GM12878 (cell line): ENCODE measurements at regions of chr9 and their contacts with region 1.

Region 1: GRCh38 chr9:122904823-122905710 is at the start of gene RC3H2:
- DNase-seq: peak; percentile 99
- ATAC-seq: peak; percentile 88
- H3K4me3 ChIP-seq: peak within 1 kb of the TSS; percentile 98
- H3K27ac ChIP-seq: peak within 1 kb of the TSS; percentile 92
- H3K4me1 ChIP-seq: peaks cover 6% of the 10 kb centered on the region
- H3K27me3 ChIP-seq: no peaks in the 10 kb centered on the region
- CTCF ChIP-seq: no peak
- EP300 ChIP-seq: peak; percentile 31 to 38; a peak in 1 of 4 replicates
- POLR2A ChIP-seq: peak; percentile 94
- RAD21 ChIP-seq: no peak
- polyA plus RNA-seq, gene RC3H2: 7.2 to 9.1 TPM

Region 2: DNA sequence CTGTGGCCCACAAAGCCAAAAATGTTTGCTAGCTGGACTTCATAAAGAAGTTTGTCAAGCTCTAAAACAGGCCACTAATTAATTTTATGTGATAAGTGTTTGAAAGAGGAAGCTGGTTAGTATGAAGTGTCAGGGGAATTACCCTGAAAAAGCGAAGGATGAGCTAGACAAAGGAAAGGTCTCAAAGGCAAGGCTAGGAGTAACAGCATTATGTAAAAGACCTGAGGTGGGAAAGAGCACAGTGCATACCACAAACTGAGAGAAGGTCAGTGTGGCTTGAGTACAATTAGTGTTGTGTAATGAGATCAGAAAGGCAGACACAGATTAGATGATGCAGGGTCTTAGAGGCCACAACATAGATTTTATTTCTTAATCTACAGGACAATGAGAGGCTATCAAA is 29.5 kb before region 1 on chr9:
- CTCF ChIA-PET with region 1: interaction called, 3 read pairs
- POLR2A ChIA-PET with region 1: interaction called, 3 read pairs
- RAD21 ChIA-PET with region 1: interaction called, 3 read pairs
- SMC1A ChIA-PET with region 1: interaction called, 17 read pairs
- in situ Hi-C with region 1: no loop called
- intact Hi-C with region 1: no loop called
- DNase-seq: peak; percentile 20
- ATAC-seq: peak; percentile 63
- H3K4me3 ChIP-seq: no peak overlapping the region
- H3K27ac ChIP-seq: no peak overlapping the region
- H3K4me1 ChIP-seq: no peaks in the 10 kb centered on the region
- H3K27me3 ChIP-seq: no peaks in the 10 kb centered on the region
- CTCF ChIP-seq: no peak
- EP300 ChIP-seq: 0 out of 4 replicates have a peak, but pooled peaks of 1 of the 2 experiments have one; percentile 12
- POLR2A ChIP-seq: no peak
- RAD21 ChIP-seq: no peak

Region 3: DNA sequence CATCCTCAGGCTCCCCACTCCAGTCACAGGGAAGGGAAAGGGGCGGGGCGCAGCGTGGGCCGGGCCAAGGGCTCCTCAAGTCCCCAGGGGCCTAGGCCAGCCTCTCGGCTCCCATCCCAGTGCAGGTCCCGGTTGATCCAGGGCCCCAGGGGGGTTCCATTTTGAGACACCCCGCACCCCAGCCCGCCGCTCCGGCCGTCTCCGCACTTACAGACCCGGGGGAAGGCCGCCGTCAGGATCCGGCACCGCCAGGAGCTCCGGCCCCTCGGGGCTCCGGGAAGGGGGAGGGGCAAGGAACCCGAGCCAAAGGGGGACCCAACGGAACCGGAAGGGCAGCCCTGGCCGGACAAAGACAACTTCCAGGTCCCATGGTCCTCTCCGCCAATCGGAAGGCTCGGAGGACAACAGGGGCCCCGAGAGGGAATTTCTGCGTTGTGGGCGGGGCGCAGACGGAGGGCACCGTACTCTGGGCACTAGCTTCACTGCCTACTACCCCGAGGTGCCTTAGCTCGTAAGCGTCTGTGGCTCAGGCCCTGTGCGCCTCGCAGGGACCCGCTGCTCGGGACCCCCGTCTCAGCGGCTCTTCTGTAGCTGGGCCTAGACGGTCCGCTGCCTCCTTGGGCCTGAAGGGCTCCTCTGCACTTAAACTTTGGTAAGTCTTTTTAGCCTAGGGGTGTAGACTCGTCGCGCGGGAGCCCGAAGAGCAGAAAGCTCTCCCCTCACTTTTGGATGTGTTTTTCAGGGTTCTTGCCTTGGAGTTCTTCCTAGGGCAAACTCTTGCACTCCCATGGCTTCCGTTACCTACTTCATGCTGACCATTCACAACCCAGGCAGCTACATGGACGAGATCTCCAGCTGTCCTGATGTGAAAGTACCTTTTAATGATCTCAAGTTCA is 26.4 kb after region 1 on chr9 and contains the start of gene ZBTB26:
- CTCF ChIA-PET with region 1: interaction called, 6 read pairs
- POLR2A ChIA-PET with region 1: interaction called, 41 read pairs
- RAD21 ChIA-PET with region 1: interaction called, 11 read pairs
- SMC1A ChIA-PET with region 1: interaction called, 21 read pairs
- in situ Hi-C with region 1: no loop called
- intact Hi-C with region 1: no loop called
- DNase-seq: peak; percentile 74
- ATAC-seq: peak; percentile 98
- H3K4me3 ChIP-seq: peak within 1 kb of the TSS; percentile 88
- H3K27ac ChIP-seq: peak within 1 kb of the TSS; percentile 56
- H3K4me1 ChIP-seq: peaks cover 4% of the 10 kb centered on the region
- H3K27me3 ChIP-seq: no peaks in the 10 kb centered on the region
- CTCF ChIP-seq: no peak
- EP300 ChIP-seq: no peak
- POLR2A ChIP-seq: peak; percentile 88
- RAD21 ChIP-seq: no peak
- polyA plus RNA-seq, gene ZBTB26: 1.8 to 2.4 TPM

Region 4: DNA sequence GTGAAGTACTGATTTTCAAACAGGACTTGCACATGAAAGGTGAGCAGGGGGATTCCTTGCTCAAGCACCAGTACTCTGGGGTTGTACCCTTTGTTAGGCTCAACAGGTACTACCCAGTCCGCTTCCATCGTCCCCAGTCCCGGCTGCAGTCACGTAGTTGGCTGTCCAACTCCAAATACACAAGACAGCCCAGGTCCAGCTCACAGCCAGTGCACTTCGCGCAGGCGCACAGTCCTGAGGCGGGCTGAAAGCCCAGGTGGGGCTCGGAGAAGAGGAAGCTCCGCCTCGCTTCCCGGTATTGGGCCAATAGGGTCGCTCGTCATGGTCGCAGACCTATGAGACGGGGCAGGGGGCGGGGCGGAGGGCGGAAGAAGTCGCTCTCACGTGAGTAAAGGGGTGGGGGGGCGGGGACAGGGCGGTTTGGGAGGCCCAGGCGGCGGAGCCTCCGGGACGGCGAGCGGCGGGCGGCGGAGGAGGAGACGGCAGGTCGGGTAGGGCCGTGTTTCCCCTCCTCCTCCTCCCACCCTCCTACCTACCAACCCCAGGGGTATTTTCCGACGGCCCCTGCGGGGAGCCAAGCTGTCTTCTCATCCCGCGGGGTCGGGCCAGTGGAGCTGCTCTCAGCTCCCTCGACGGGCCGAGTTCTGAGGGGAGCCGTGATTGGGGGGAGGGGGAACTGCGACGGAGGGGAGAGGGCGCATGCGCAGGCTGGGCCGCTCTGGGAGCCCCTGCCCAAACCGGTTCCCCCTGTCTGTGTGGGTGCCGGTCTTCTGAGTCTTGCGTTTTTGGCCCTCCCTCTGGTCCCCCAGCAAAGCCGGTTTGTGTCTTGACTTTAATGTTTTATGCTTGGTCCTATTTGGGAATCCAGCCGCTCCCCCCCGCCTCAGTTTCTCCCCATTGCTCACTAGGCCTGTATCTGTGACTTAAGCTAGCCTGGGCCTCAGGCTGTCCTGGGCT is 35.8 kb after region 1 on chr9 and contains the start of gene RABGAP1:
- CTCF ChIA-PET with region 1: interaction called, 3 read pairs
- POLR2A ChIA-PET with region 1: interaction called, 53 read pairs
- RAD21 ChIA-PET with region 1: interaction called, 20 read pairs
- SMC1A ChIA-PET with region 1: interaction called, 15 read pairs
- in situ Hi-C with region 1: no loop called
- intact Hi-C with region 1: loop called (anchors 2 kb)
- DNase-seq: peak; percentile 94
- ATAC-seq: peak; percentile 97
- H3K4me3 ChIP-seq: peak within 1 kb of the TSS; percentile 96
- H3K27ac ChIP-seq: peak within 1 kb of the TSS; percentile 76
- H3K4me1 ChIP-seq: peaks cover 12% of the 10 kb centered on the region; the same call in 1 of the 2 replicates
- H3K27me3 ChIP-seq: no peaks in the 10 kb centered on the region
- CTCF ChIP-seq: no peak
- EP300 ChIP-seq: no peak
- POLR2A ChIP-seq: peak; percentile 93
- RAD21 ChIP-seq: no peak
- polyA plus RNA-seq, gene RABGAP1: 2.6 to 2.9 TPM

Region 5: DNA sequence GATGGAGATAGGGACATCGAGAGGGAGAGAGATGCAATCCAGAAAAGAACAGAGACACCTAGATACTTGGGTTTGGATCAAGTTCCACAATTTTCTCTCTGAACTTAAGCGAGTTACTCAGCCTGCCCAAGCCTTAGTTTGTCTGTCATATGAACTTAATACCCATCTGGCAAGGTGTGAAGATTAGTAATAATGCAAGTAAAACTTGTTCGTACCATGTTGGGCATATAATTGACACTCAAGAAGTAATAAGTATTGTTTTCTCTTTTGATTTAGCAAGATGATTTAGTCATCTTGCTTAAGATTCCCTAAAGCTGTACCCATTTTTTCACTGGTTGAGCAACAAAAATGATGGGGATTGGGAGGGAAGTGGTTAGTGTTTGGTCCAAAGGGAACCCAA is 43.2 kb after region 1 on chr9:
- CTCF ChIA-PET with region 1: interaction called, 5 read pairs
- POLR2A ChIA-PET with region 1: interaction called, 53 read pairs
- RAD21 ChIA-PET with region 1: interaction called, 5 read pairs
- SMC1A ChIA-PET with region 1: interaction called, 11 read pairs
- in situ Hi-C with region 1: no loop called
- intact Hi-C with region 1: no loop called
- DNase-seq: no peak
- ATAC-seq: peak; percentile 64
- H3K4me3 ChIP-seq: peak overlapping the region; percentile 39; the same call in 1 of the 2 replicates
- H3K27ac ChIP-seq: no peak overlapping the region
- H3K4me1 ChIP-seq: peaks cover 15% of the 10 kb centered on the region; the same call in 1 of the 2 replicates
- H3K27me3 ChIP-seq: no peaks in the 10 kb centered on the region
- CTCF ChIP-seq: no peak
- EP300 ChIP-seq: no peak
- POLR2A ChIP-seq: no peak
- RAD21 ChIP-seq: no peak

Region 6: GRCh38 chr9:124861342-124862229 is 1956.5 kb after region 1 on chr9 and contains the starts of genes ARPC5L and RPL35:
- CTCF ChIA-PET with region 1: no interaction called
- POLR2A ChIA-PET with region 1: no interaction called
- RAD21 ChIA-PET with region 1: no interaction called
- SMC1A ChIA-PET with region 1: no interaction called
- in situ Hi-C with region 1: loop called (anchors 25 kb)
- intact Hi-C with region 1: no loop called
- DNase-seq: peak; percentile 80
- ATAC-seq: peak; percentile 95
- H3K4me3 ChIP-seq: peak within 1 kb of the TSS; percentile 95
- H3K27ac ChIP-seq: peak within 1 kb of the TSS; percentile 83
- H3K4me1 ChIP-seq: peaks cover 13% of the 10 kb centered on the region
- H3K27me3 ChIP-seq: no peaks in the 10 kb centered on the region
- CTCF ChIP-seq: peak; percentile 5 to 16 (median 15); a peak in 2 of 6 replicates
- EP300 ChIP-seq: no peak
- POLR2A ChIP-seq: peak; percentile 99
- RAD21 ChIP-seq: no peak
- polyA plus RNA-seq, gene ARPC5L: 42.3 to 121 TPM
- polyA plus RNA-seq, gene RPL35: 5,281 to 6,300 TPM